Panc1 (cell line): ENCODE measurements at regions of chr5 and their contacts with region 1.

Region 1: DNA sequence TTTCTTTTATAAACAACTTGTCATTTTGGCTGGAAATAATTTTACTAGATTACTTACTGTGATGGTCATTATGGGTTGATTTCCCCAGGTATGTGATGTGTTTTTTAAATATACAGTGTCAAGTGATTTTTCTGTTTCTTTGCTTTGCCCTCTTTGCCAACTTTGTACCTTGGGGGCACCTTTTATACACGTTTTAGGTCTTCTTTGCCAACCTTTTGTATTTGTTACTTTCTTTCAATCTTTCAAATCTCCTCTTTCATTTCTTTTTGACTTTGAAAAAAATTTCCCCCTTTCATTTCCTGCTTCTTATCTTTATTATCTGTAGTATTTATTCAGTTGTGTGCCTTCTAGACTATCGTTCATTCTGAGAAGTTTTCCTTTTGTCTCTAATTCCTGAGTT is 65.4 kb upstream of the DHFR start:
- DNase-seq: no peak
- ATAC-seq: no peak
- H3K4me3 ChIP-seq: no peak overlapping the region
- H3K27ac ChIP-seq: no peak overlapping the region
- H3K4me1 ChIP-seq: no peaks in the 10 kb centered on the region
- H3K27me3 ChIP-seq: no peaks in the 10 kb centered on the region
- CTCF ChIP-seq: no peak

Region 2: DNA sequence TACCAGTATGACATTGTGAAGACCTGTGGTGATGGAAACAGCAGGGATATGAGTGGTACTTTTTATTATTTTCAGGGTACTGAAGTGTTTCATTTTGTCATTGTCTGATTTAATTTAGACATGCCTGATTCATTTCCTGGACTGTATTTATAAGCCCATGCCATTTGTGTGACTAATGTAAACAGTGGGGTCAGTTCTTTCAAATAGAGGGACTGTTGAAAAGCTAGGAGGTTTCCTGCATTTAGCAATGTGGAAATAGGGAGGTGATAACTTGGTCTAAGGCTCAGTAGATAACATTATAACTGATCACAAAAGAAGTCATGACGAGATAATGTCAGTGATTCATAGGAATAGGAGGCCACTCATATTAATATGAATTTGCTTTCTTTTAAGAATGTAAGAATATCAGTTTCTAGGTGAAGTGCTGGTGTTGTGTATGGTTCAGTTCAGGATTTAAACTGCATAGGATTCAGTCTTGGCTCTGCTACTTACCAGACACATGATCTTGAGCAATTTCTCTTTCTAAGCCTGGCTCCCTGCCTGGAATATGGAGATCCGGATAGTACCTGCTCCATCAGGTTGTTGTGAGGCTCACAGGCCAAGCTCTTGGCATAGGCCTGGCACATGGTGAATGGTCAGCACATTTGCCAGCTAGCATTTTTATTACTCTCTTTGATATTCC is 247.5 kb after region 1 on chr5:
- CTCF ChIA-PET with region 1: no interaction called
- POLR2A ChIA-PET with region 1: interaction called, 16 read pairs
- in situ Hi-C with region 1: no loop called
- intact Hi-C with region 1: no loop called
- DNase-seq: peak; percentile 93
- ATAC-seq: peak; percentile 96
- H3K4me3 ChIP-seq: no peak overlapping the region
- H3K27ac ChIP-seq: peak overlapping the region; percentile 78
- H3K4me1 ChIP-seq: peaks cover 15% of the 10 kb centered on the region; the same call in 1 of the 2 replicates
- H3K27me3 ChIP-seq: no peaks in the 10 kb centered on the region
- CTCF ChIP-seq: no peak